Natural killer cell (primary cell): ENCODE measurements at regions of chr1 and their contacts with region 1.

Region 1: GRCh38 chr1:24955161-24955560 is 25.1 kb upstream of the RUNX3 start:
- DNase-seq: peak in 1 of 2 donors; percentile 79
- ATAC-seq: peak; percentile 66 to 82 (median 79)
- H3K4me3 ChIP-seq: no peak overlapping the region
- H3K4me3 Mint-ChIP-seq: peak overlapping the region; percentile 26
- H3K27ac ChIP-seq: peak overlapping the region; percentile 26
- H3K27ac Mint-ChIP-seq: peak overlapping the region; percentile 60 to 68
- H3K4me1 ChIP-seq: peaks cover 83% of the 10 kb centered on the region
- H3K4me1 Mint-ChIP-seq: peaks cover 36 to 59% of the 10 kb centered on the region in 2 donors
- H3K27me3 ChIP-seq: no peaks in the 10 kb centered on the region
- H3K27me3 Mint-ChIP-seq: peaks cover 13 to 17% of the 10 kb centered on the region in 2 donors
- CTCF ChIP-seq: no peak

Region 2: DNA sequence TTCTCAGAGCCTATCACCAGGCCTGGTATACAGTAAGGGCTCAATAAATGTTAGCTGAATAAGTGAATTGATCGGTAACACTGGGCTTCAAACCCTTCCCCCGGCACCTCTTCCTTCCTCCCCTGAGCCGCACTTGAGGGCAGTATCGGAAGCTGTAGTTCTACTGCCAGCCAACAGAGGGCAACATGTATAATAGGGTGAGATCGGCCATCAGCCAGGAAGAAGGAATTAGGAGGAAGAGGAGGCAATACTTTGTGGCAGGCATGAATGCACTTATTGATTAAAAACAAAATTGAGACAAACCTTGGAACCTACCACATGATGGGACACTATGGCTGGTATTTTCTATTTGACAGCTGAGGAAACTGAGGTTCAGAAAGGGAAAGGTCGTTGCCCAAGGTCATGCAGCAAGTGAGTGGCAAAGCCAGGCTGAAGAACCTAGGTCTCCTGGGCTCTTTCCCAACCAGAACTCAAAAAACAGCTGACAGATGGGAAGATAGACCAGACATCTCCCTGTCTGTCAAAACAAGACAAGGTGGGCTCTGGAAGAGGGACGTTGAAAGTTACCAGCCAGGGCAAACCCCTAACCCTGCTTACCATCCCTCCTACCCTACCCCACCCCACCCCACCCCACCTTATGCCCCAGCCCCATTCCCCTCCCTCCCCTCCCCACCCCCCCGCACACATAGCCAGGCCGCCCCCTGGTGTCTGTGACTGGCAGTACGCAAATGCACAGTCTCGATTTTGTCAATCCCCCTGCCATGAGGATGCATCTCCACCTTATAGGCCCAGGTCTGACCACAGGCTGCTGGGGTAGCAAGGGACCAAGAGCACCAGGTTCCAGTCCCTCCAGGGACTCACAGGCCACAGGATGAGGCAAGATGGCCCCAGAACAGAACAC is 82.3 kb after region 1 on chr1:
- intact Hi-C with region 1: loop called (anchors 1 kb)
- DNase-seq: peak in 1 of 2 donors; percentile 83
- ATAC-seq: no peak
- H3K4me3 ChIP-seq: no peak overlapping the region
- H3K4me3 Mint-ChIP-seq: no peak overlapping the region
- H3K27ac ChIP-seq: no peak overlapping the region
- H3K27ac Mint-ChIP-seq: peak overlapping the region in 1 of 2 donors; percentile 25
- H3K4me1 ChIP-seq: peaks cover 81% of the 10 kb centered on the region
- H3K4me1 Mint-ChIP-seq: peaks cover 38 to 45% of the 10 kb centered on the region in 2 donors
- H3K27me3 ChIP-seq: no peaks in the 10 kb centered on the region
- H3K27me3 Mint-ChIP-seq: peaks cover 14 to 17% of the 10 kb centered on the region in 2 donors
- CTCF ChIP-seq: peak; percentile 32

Region 3: GRCh38 chr1:25099343-25099951 is 144.3 kb after region 1 on chr1:
- intact Hi-C with region 1: loop called (anchors 1 kb)
- DNase-seq: peak; percentile 64 to 71
- ATAC-seq: peak; percentile 60 to 77 (median 74)
- H3K4me3 ChIP-seq: peak overlapping the region; percentile 2
- H3K4me3 Mint-ChIP-seq: peak overlapping the region; percentile 78
- H3K27ac ChIP-seq: peak overlapping the region; percentile 54
- H3K27ac Mint-ChIP-seq: peak overlapping the region; percentile 75 to 84
- H3K4me1 ChIP-seq: peaks cover 77% of the 10 kb centered on the region
- H3K4me1 Mint-ChIP-seq: peaks cover 65 to 74% of the 10 kb centered on the region in 2 donors
- H3K27me3 ChIP-seq: no peaks in the 10 kb centered on the region
- H3K27me3 Mint-ChIP-seq: peaks cover 30 to 44% of the 10 kb centered on the region in 2 donors
- CTCF ChIP-seq: no peak

Region 4: DNA sequence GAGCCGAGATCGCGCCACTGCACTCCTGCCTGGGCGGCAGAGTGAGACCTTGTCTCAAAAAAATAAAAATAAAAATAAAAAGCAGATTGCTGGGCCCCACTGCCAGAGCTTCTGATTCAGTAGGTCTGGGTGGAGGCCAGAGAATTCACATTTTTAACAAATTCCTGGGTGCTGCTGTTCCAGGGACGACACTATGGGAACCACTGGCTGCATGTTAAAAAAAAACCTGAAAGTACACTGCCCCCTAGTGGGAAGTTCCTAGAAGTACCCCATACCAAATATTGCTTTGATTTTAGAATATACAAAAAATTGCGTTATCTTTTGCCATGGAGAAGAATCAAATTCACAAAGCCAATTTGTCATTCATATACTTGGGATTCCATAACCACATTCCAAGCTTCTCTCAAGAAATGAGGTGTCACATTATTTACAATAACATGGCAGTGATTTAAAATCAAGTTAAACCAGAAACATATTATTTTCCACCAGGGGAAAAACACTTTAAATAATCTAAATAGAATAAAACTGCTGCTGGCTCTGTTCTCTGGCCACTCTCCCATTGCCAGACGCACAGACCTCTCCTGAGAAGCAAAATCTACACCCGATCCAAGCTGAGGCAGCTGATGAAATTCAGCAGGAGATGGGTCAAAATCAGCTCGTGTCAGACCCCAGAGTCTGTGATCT is 249.8 kb after region 1 on chr1:
- intact Hi-C with region 1: loop called (anchors 1 kb)
- DNase-seq: peak in 1 of 2 donors; percentile 75
- ATAC-seq: peak; percentile 73 to 87 (median 86)
- H3K4me3 ChIP-seq: no peak overlapping the region
- H3K4me3 Mint-ChIP-seq: no peak overlapping the region
- H3K27ac ChIP-seq: no peak overlapping the region
- H3K27ac Mint-ChIP-seq: no peak overlapping the region
- H3K4me1 ChIP-seq: no peaks in the 10 kb centered on the region
- H3K4me1 Mint-ChIP-seq: no peaks in the 10 kb centered on the region
- H3K27me3 ChIP-seq: no peaks in the 10 kb centered on the region
- H3K27me3 Mint-ChIP-seq: peaks cover 3 to 13% of the 10 kb centered on the region in 2 donors
- CTCF ChIP-seq: peak; percentile 83